Activated naive CD4-positive, alpha-beta T cell treated with anti-CD3 and anti-CD28 coated beads for 36 hours (primary cell): ENCODE measurements at regions of chr7 and their contacts with region 1.

Region 1: GRCh38 chr7:23298885-23299769 is at the start of gene MALSU1:
- DNase-seq: peak; percentile 99
- H3K4me3 Mint-ChIP-seq: peak within 1 kb of the TSS; percentile 96
- H3K27ac Mint-ChIP-seq: peak within 1 kb of the TSS; percentile 95
- H3K4me1 Mint-ChIP-seq: peaks cover 30% of the 10 kb centered on the region
- H3K27me3 Mint-ChIP-seq: no peaks in the 10 kb centered on the region
- total RNA-seq, gene MALSU1: 98.4 to 101 TPM

Region 2: DNA sequence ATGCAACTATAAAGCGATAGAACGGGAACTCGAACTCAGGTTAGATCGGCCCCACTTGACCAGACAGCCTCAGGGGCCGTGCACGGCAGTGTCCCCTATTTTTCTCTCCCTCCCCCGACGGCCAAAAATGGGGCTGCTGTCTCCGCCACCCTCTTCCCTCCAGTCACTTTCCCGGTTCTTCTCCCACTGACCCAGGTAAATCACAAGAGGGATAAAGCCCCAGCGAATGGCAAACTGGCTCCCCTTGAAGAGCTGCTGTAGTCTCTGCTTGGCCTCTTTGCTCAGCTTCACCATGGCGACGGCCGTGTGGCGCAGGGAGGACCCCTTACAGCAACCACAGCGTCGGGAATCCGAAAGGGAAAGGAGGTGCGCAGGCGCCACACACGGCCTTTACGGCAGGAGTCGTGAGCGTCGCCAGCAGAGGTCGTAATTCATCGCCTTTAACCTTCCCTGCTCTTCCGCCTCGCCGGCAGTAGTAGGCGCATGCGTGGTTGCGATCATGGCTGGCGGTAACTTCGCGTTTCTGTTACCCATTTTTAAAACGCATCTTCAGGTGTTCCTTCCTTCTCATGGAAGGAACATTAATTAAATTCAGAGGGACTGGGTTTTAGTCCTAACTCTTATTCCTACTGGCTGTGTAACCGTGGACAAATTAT is 476.5 kb before region 1 on chr7 and contains the start of gene TOMM7:
- CTCF ChIA-PET with region 1: no interaction called
- intact Hi-C with region 1: loop called (anchors 1 kb)
- DNase-seq: peak; percentile 92
- H3K4me3 Mint-ChIP-seq: peak within 1 kb of the TSS; percentile 99
- H3K27ac Mint-ChIP-seq: peak within 1 kb of the TSS; percentile 96
- H3K4me1 Mint-ChIP-seq: peaks cover 36% of the 10 kb centered on the region
- H3K27me3 Mint-ChIP-seq: peaks cover 10% of the 10 kb centered on the region
- total RNA-seq, gene TOMM7: 269 to 297 TPM

Region 3: DNA sequence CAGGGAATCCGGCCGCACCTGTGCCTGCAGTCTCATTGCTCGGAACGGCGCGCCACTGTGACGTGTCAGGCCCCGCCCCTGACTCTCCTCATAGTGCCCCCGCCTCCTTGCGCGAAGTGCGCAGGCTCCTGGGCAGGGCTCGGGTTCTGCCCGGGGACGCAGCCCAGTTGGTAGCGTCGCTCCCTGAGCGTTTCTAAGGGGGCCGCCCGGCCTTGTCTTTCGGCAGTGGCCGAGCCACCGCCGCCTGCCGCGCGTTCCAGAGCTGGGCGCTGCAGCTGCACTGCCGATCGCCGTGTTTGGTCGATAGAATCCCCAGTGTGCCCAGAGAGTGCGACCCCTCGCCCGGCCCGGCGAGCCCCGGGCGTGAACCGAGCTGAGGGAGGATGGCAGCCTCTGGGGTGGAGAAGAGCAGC is 193.5 kb before region 1 on chr7 and contains the start of gene KLHL7:
- CTCF ChIA-PET with region 1: no interaction called
- intact Hi-C with region 1: loop called (anchors 1 kb)
- DNase-seq: peak; percentile 98
- H3K4me3 Mint-ChIP-seq: peak within 1 kb of the TSS; percentile 93
- H3K27ac Mint-ChIP-seq: peak within 1 kb of the TSS; percentile 89
- H3K4me1 Mint-ChIP-seq: peaks cover 35% of the 10 kb centered on the region
- H3K27me3 Mint-ChIP-seq: no peaks in the 10 kb centered on the region
- total RNA-seq, gene KLHL7: 24.0 to 26.4 TPM

Region 4: GRCh38 chr7:23287612-23288011 is 11.5 kb before region 1 on chr7:
- CTCF ChIA-PET with region 1: no interaction called
- intact Hi-C with region 1: loop called (anchors 1 kb)
- DNase-seq: peak; percentile 17
- H3K4me3 Mint-ChIP-seq: no peak overlapping the region
- H3K27ac Mint-ChIP-seq: peak overlapping the region; percentile 50
- H3K4me1 Mint-ChIP-seq: peaks cover 20% of the 10 kb centered on the region
- H3K27me3 Mint-ChIP-seq: no peaks in the 10 kb centered on the region

Region 5: DNA sequence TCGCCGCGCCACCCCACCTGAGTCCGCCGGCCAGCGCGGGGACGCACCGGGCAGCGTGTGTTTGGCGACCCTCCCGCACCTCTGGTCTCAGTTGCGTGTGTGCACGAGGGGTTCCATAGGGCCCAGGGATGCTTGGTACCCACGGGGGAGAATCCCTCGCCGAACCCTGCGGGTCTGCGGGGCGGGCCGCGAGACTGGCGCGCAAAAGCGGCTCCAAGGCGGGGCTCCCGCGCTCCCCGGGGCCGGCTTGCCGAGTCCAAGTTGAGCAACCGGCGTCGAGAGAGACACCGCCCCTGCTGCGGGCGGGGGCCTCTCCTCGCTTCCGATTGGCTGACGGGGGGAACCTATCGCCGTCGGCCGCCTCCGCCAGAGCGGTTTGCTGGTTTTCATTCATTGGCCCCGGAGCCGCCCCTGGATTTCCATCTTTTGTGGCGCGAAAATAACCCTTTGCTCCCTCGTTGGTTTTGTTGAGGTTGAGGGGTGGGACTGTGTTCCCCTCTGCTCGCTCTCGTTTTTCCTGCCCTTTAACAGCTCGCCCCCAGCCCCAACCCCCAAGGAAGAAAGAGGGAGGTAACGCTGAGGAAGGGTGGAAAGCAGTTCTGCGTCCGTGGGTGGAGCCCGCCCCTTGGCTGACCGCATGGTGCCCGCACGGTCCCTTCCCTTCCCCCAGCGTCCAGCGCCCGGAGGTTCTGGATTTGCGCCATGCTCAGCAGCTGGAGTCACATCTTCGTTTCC is 175.1 kb after region 1 on chr7:
- CTCF ChIA-PET with region 1: no interaction called
- intact Hi-C with region 1: loop called (anchors 1 kb)
- DNase-seq: peak; percentile 91
- H3K4me3 Mint-ChIP-seq: peak overlapping the region; percentile 76
- H3K27ac Mint-ChIP-seq: peak overlapping the region; percentile 30
- H3K4me1 Mint-ChIP-seq: peaks cover 22% of the 10 kb centered on the region
- H3K27me3 Mint-ChIP-seq: peaks cover 57% of the 10 kb centered on the region

Region 6: GRCh38 chr7:23531794-23532489 is 232.8 kb after region 1 on chr7 and contains the start of gene TRA2A:
- CTCF ChIA-PET with region 1: no interaction called
- intact Hi-C with region 1: loop called (anchors 1 kb)
- DNase-seq: peak; percentile 99
- H3K4me3 Mint-ChIP-seq: peak within 1 kb of the TSS; percentile 99
- H3K27ac Mint-ChIP-seq: peak within 1 kb of the TSS; percentile 100
- H3K4me1 Mint-ChIP-seq: peaks cover 43% of the 10 kb centered on the region
- H3K27me3 Mint-ChIP-seq: no peaks in the 10 kb centered on the region
- total RNA-seq, gene TRA2A: 77.8 to 79.0 TPM